Posterior vena cava (tissue), 2 donors: ENCODE measurements at regions of chr1 and their contacts with region 1.

Region 1: GRCh38 chr1:186790101-186790500 is 38.6 kb upstream of the PLA2G4A start:
- DNase-seq: no peak

Region 2: GRCh38 chr1:186494832-186495271 is 295.2 kb before region 1 on chr1:
- intact Hi-C with region 1: no loop called
- DNase-seq: no peak

Region 3: DNA sequence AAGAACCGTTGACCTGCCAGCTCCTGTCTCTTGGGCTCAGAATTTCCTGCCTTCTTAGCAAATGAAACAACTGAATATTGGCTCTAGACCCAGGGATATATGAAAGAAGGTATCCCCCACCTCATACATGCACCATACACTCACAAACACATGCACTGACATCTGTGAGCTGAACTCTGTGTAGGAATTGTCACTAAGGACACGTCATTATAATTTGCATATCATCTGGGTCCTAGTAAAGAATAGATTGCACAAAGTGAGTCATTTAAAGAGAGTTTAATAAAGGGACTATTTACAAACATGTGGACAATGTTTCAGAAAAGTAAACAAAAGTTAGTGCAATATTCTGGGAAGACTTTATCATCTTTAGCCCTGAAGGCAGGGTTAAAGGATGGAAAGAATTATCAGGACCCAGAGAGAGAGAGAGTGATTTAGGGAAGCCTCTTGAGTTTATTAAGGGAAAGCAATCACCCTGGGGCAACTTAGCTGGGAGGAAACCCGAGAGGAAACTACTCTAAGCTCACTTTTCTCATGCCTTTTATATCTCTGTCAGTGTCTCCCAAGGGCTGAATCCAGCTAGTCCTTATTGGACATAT is 35.5 kb before region 1 on chr1:
- intact Hi-C with region 1: no loop called
- DNase-seq: no peak

Region 4: DNA sequence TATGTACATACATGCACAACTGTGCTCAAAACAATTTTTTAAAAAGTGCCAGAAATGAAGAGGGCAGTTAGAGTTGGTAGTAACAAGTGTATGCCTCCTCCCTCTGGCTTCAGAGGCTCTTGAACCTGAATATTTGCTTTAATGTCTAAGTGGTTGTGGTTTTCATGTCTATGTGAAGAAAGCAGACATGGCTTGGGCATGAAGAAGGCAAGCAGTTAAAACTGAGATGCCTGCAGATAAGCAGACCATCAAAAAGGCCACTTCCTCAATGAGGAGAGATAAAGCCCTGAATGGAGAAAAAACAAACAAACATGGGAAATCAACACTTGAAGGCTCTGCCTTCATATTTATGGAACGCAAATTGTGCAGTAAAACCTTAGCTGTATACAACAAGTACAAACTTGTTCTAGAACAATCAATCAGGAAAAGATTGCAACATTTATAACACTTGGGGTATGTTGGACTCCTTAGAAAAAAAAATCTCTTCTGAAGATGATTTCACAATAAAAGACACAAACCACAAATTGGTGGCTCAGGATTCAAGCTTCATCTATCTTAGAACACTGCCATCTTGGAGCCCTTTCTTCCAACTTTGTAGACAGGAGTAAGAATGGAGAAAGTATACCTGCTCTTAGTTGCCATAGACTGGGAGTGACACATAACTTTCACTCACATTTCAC is 14.1 kb before region 1 on chr1:
- intact Hi-C with region 1: loop called in 1 of 2 experiments (anchors 1 kb)
- DNase-seq: no peak